ENCODE measurements at regions of chr9 and their contacts with region 1.

Region 1: GRCh38 chr9:21831961-21832509 is 29.6 kb downstream of the MTAP start:
- DNase-seq: peak; percentile 74
- H3K4me3 Mint-ChIP-seq: no peak overlapping the region
- H3K27ac Mint-ChIP-seq: peak overlapping the region; percentile 33
- H3K4me1 Mint-ChIP-seq: peaks cover 66% of the 10 kb centered on the region
- H3K27me3 Mint-ChIP-seq: no peaks in the 10 kb centered on the region

Region 2: GRCh38 chr9:21852754-21853153 is 20.7 kb after region 1 on chr9:
- CTCF ChIA-PET with region 1: no interaction called
- POLR2A ChIA-PET with region 1: no interaction called
- intact Hi-C with region 1: loop called (anchors 2 kb)
- DNase-seq: no peak
- H3K4me3 Mint-ChIP-seq: no peak overlapping the region
- H3K27ac Mint-ChIP-seq: no peak overlapping the region
- H3K4me1 Mint-ChIP-seq: peaks cover 31% of the 10 kb centered on the region
- H3K27me3 Mint-ChIP-seq: no peaks in the 10 kb centered on the region

Region 3: GRCh38 chr9:21919377-21920362 is 87.6 kb after region 1 on chr9:
- CTCF ChIA-PET with region 1: no interaction called
- POLR2A ChIA-PET with region 1: no interaction called
- intact Hi-C with region 1: loop called (anchors 5 kb)
- DNase-seq: peak; percentile 11
- H3K4me3 Mint-ChIP-seq: no peak overlapping the region
- H3K27ac Mint-ChIP-seq: peak overlapping the region; percentile 44
- H3K4me1 Mint-ChIP-seq: peaks cover 20% of the 10 kb centered on the region
- H3K27me3 Mint-ChIP-seq: no peaks in the 10 kb centered on the region

Region 4: DNA sequence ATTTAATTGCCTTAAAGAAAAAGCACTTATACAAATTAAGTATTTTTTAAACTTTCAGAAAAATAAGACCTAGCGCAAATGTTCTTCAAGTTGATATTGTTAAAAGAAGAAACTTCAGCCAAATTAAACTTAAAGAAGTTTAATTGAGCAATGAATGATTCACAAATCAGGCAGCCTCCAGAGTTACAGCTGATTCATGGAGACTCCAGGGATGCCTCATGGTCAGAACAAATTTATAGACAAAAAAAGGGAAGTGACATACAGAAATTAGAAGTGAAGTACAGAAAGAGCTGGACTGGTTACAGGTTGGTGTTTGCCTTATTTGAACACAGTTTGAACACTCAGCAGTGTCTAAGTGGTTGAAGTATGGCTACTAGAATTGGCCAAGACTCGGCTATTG is 101.8 kb after region 1 on chr9:
- CTCF ChIA-PET with region 1: no interaction called
- POLR2A ChIA-PET with region 1: no interaction called
- intact Hi-C with region 1: no loop called
- DNase-seq: no peak
- H3K4me3 Mint-ChIP-seq: no peak overlapping the region
- H3K27ac Mint-ChIP-seq: no peak overlapping the region
- H3K4me1 Mint-ChIP-seq: no peaks in the 10 kb centered on the region
- H3K27me3 Mint-ChIP-seq: no peaks in the 10 kb centered on the region

Region 5: GRCh38 chr9:21965401-21965951 is 133.4 kb after region 1 on chr9:
- CTCF ChIA-PET with region 1: no interaction called
- POLR2A ChIA-PET with region 1: no interaction called
- intact Hi-C with region 1: loop called (anchors 5 kb)
- DNase-seq: peak; percentile 71
- H3K4me3 Mint-ChIP-seq: peak overlapping the region; percentile 54
- H3K27ac Mint-ChIP-seq: no peak overlapping the region
- H3K4me1 Mint-ChIP-seq: peaks cover 22% of the 10 kb centered on the region
- H3K27me3 Mint-ChIP-seq: peaks cover 84% of the 10 kb centered on the region

Region 6: DNA sequence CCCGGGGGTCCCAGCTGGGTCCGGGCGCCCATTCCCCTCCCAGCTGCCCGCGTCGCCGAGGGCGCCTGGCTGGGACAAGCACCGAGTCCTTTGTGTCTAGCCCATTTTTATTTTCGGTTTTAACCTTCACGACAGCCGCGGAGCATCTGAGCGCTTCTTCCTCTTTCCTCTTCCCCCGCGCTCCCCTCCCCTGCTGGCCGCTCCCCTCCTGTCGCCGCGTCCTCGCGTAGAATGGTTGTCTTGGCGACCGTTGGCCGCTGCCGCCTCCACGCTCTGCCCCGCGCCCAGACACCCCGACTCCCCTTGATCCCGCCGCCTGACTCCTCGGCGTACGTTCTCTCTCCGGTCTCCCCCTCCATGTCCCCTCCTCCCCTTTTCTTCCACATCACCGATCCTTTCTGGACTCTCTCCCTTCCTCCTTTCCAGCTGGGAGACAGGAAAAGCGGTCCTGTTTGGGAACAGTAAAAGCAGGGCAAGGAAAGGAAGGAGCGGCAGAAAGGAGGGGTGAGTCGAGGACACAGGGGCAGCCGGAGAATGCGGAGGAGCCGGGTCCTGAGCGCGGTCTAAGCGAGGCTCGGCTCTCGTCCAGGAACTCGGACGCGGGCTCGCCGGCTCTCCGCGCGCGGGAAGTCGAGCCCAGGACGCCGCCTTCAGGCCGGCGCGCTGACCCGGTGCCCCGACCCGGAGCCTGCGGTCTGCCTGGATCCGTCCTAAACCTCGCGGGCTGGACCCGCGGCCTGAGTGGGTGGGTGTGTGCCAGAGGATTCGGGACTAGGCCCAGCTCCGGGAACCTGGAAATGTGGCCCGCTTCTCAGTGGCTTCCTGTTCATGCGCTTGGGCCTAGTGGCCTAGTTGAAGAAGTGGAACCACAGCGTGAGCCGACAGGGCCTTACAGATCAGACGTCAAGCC is 163.4 kb after region 1 on chr9:
- CTCF ChIA-PET with region 1: no interaction called
- POLR2A ChIA-PET with region 1: no interaction called
- intact Hi-C with region 1: loop called (anchors 1 kb)
- DNase-seq: peak; percentile 87
- H3K4me3 Mint-ChIP-seq: peak overlapping the region; percentile 86
- H3K27ac Mint-ChIP-seq: peak overlapping the region; percentile 44
- H3K4me1 Mint-ChIP-seq: peaks cover 11% of the 10 kb centered on the region
- H3K27me3 Mint-ChIP-seq: peaks cover 16% of the 10 kb centered on the region

Region 7: DNA sequence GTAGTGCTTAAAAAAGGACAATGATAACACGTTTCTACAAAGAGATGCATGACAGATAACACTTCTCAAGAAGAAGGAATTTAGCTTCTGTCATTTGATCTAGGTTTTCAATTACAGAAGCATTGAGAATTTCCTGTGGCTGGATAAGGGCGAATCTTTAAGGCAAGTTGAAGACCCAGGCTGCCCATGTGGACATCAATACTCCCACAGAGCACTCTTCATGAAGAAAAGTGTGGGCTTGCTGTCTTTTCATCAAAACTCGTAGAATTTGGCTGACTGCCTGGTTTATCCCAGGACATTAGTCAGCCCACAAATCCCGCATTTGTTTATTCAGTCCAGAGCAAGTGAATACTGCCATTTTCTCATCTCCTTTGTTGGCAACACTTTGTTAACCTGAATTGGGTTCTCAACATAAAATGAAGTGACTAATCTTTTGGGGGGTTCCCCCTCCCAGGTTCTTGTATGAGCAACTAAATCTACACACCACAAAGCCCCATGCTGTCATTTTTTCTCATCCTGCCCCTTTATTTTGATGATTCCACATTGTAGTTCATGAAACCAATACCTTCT is 220.4 kb after region 1 on chr9:
- CTCF ChIA-PET with region 1: no interaction called
- POLR2A ChIA-PET with region 1: no interaction called
- intact Hi-C with region 1: loop called (anchors 1 kb)
- DNase-seq: peak; percentile 50
- H3K4me3 Mint-ChIP-seq: no peak overlapping the region
- H3K27ac Mint-ChIP-seq: no peak overlapping the region
- H3K4me1 Mint-ChIP-seq: peaks cover 26% of the 10 kb centered on the region
- H3K27me3 Mint-ChIP-seq: peaks cover 12% of the 10 kb centered on the region

Region 8: DNA sequence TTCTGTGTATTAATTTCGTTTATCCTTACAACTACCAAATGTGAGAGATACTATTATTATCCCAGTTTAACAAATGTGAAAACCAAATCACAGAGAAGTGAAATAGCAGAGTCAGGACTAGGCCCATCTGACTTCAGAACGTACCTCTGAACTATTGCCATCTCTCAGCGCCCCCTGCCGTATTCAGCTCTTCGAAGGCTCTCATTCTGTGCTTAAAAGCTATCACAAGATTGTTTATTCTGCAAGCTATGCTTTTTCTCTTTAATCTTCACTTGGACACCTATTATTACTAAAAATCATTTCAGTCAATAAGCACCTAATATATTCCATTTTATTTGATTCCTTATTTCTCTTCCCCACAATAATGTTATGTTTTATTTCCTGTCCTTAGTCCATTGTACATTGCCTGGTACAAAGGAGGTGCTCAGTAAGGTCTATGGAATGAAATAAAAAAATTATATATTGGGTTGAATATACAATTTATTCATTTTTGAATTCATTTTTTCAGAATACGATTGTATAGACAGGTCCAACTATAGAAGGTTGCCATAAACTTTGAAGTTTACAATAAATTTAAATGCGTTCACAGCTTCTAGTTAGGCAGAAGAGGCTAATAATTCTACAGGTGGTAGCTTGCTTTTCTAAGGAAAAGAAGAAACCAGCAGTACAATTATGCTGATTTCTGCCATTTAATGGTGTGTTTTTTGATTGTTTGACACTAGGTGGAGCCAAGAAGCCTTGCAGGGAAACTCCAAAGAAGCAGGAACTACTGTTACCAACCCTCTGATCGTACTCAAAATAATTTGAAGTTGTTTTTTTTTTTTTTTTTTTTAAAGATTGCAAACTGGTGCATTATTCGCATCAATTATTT is 412.3 kb after region 1 on chr9:
- CTCF ChIA-PET with region 1: interaction called, 4 read pairs
- POLR2A ChIA-PET with region 1: no interaction called
- intact Hi-C with region 1: loop called (anchors 5 kb)
- DNase-seq: peak; percentile 48
- H3K4me3 Mint-ChIP-seq: no peak overlapping the region
- H3K27ac Mint-ChIP-seq: no peak overlapping the region
- H3K4me1 Mint-ChIP-seq: peaks cover 20% of the 10 kb centered on the region
- H3K27me3 Mint-ChIP-seq: peaks cover 16% of the 10 kb centered on the region

Region 9: GRCh38 chr9:22986556-22986955 is 1154.5 kb after region 1 on chr9:
- CTCF ChIA-PET with region 1: no interaction called
- POLR2A ChIA-PET with region 1: no interaction called
- intact Hi-C with region 1: no loop called
- DNase-seq: no peak
- H3K4me3 Mint-ChIP-seq: no peak overlapping the region
- H3K27ac Mint-ChIP-seq: no peak overlapping the region
- H3K4me1 Mint-ChIP-seq: no peaks in the 10 kb centered on the region
- H3K27me3 Mint-ChIP-seq: no peaks in the 10 kb centered on the region